ENCODE measurements at regions of chr10 and their contacts with region 1.

Region 1: GRCh38 chr10:30413996-30414576 is 19.9 kb upstream of the MAP3K8 start:
- DNase-seq: peak; percentile 70
- CTCF ChIP-seq: peak; percentile 85

Region 2: GRCh38 chr10:30445711-30446110 is 31.6 kb after region 1 on chr10:
- CTCF ChIA-PET with region 1: interaction called, 10 read pairs
- POLR2A ChIA-PET with region 1: no interaction called
- DNase-seq: no peak
- CTCF ChIP-seq: no peak

Region 3: DNA sequence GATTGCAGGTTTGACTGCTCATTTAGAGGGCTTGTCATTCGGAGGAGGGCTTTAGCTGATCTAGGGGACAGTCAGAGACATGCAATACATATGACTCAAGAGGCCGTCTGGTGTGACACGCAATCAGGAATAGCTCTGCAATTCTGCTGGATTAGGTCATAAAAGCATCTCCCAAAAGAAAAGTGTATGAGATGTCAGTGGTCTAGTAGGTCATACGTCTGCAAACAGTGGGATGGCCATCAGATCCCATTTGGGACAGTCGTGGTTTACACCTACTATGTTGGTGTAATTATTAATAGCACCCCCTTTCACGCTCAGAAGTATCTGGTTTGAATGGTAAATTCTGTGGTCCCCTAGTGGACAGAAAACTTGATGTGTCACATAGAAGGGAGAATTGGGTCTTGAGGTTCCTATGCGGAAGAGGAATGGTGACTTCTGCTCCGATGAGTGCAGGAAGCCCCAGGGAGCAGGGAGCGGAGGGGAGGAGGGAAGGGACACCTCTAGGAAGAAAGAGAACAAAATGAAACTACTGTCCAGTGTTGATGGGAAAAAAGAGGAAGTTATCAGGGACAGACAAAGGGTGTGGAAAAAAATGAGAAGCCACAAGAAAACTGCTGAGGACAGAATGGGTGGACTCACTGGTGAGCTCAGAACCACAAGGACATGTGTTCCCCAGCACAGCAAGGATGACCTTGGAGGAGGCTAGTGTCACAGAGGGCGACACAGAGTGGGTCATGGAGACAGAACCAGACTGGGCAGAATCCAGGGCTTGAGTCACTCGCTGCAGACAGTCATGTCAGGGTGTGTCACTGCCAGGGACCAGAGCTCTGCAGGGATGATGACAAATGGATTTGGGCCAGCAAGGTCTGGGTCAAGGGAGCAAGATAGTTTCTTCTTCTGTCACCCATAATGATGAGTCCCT is 79.8 kb after region 1 on chr10:
- CTCF ChIA-PET with region 1: interaction called, 14 read pairs
- POLR2A ChIA-PET with region 1: no interaction called
- DNase-seq: no peak
- CTCF ChIP-seq: peak; percentile 22

Region 4: DNA sequence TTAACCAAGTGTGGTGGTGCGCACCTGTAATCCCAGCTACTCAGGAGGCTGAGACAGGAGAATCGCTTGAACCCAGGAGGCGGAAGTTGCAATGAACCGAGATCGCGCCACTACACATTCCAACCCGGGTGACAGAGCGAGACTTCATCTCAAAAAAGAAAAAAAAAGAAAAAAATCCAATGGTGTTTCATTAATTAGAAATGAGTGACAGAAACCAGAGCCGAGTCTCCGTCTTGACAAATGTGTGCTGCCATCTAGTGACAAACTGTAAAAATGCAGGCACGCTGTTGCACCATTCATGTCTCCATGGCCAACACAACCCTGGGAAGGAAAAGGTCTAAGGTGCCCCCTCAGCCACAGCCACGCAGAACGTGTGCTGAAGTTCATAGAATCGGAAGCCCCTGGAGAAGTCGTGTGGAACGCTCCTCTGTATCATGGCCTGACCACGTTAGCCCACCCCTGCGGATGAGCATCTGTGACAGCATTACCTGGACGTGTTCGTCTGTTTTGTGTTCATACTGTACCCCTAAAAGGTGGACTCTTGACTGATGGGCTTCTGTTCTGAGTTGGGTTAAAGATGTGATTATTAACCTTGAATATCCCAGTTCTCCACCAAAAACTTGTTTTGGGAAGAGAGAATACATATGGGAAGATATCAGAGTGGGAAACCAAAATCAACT is 120.5 kb after region 1 on chr10:
- CTCF ChIA-PET with region 1: interaction called, 50 read pairs
- POLR2A ChIA-PET with region 1: no interaction called
- DNase-seq: peak; percentile 67
- CTCF ChIP-seq: peak; percentile 88

Measured in GM10248 (cell line).